SK-N-SH (cell line): ENCODE measurements at regions of chr7 and their contacts with region 1.

Region 1: GRCh38 chr7:134031835-134032617 is 95.1 kb upstream of the LRGUK start:
- DNase-seq: no peak
- H3K4me3 ChIP-seq: no peak overlapping the region
- H3K27ac ChIP-seq: peak overlapping the region in 1 of 2 experiments; percentile 53; a peak in 1 of 4 replicates
- H3K4me1 ChIP-seq: peaks cover 0 to 5% of the 10 kb centered on the region in 2 experiments; a peak in 2 of 4 replicates
- H3K27me3 ChIP-seq: no peaks in the 10 kb centered on the region
- CTCF ChIP-seq: peak; percentile 31
- EP300 ChIP-seq: no peak
- RAD21 ChIP-seq: peak; percentile 62

Region 2: GRCh38 chr7:133957845-133958244 is 74.2 kb before region 1 on chr7:
- CTCF ChIA-PET with region 1: no interaction called
- POLR2A ChIA-PET with region 1: no interaction called
- DNase-seq: peak; percentile 66
- H3K4me3 ChIP-seq: no peak overlapping the region
- H3K27ac ChIP-seq: peak overlapping the region in 1 of 2 experiments; percentile 98; a peak in 2 of 4 replicates
- H3K4me1 ChIP-seq: peaks cover 0 to 41% of the 10 kb centered on the region in 2 experiments; a peak in 2 of 4 replicates
- H3K27me3 ChIP-seq: no peaks in the 10 kb centered on the region
- CTCF ChIP-seq: no peak
- EP300 ChIP-seq: peak in 1 of 2 experiments; percentile 95; a peak in 2 of 4 replicates
- RAD21 ChIP-seq: peak; percentile 34; the same call in 1 of the 2 replicates

Region 3: GRCh38 chr7:134042307-134042706 is 10.3 kb after region 1 on chr7:
- CTCF ChIA-PET with region 1: interaction called, 13 read pairs
- POLR2A ChIA-PET with region 1: no interaction called
- DNase-seq: peak; percentile 59
- H3K4me3 ChIP-seq: no peak overlapping the region
- H3K27ac ChIP-seq: peak overlapping the region in 1 of 2 experiments; percentile 91; a peak in 2 of 4 replicates
- H3K4me1 ChIP-seq: peaks cover 0 to 29% of the 10 kb centered on the region in 2 experiments; a peak in 2 of 4 replicates
- H3K27me3 ChIP-seq: no peaks in the 10 kb centered on the region
- CTCF ChIP-seq: no peak
- EP300 ChIP-seq: peak in 1 of 2 experiments; percentile 85; a peak in 2 of 4 replicates
- RAD21 ChIP-seq: peak; percentile 22